PC-9 (cell line): ENCODE measurements at regions of chr12 and their contacts with region 1.

Region 1: GRCh38 chr12:92987362-92987761 is 58.3 kb upstream of the EEA1 start:
- DNase-seq: peak in 1 of 2 experiments; percentile 72
- H3K4me3 ChIP-seq: no peak overlapping the region
- H3K27ac ChIP-seq: no peak overlapping the region
- H3K4me1 ChIP-seq: peaks cover 14% of the 10 kb centered on the region
- H3K27me3 ChIP-seq: no peaks in the 10 kb centered on the region
- CTCF ChIP-seq: peak; percentile 78

Region 2: GRCh38 chr12:91040096-91040755 is 1947.1 kb before region 1 on chr12:
- CTCF ChIA-PET with region 1: no interaction called
- POLR2A ChIA-PET with region 1: interaction called, 12 read pairs
- intact Hi-C with region 1: no loop called
- DNase-seq: no peak
- H3K4me3 ChIP-seq: no peak overlapping the region
- H3K27ac ChIP-seq: no peak overlapping the region
- H3K4me1 ChIP-seq: 0 out of 2 replicates have a peak, but pooled peaks cover 4% of the 10 kb centered on the region
- H3K27me3 ChIP-seq: no peaks in the 10 kb centered on the region
- CTCF ChIP-seq: no peak

Region 3: DNA sequence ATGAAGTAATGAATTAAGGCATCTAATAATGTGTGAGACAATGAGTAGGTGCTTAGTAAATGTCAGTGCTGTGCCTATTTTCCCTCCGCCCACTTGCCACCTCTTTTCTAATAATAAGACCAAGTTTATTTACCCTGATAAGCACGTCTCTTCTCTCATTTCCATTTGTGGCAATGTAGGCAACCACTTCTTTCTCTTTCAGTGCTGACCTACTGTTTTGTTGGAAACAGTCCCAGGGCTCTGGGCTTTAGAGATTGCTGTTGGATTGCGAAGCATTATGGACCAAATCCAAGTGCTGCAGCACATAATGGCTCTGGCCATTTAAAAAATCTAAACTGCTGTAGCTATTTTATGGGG is 425.8 kb before region 1 on chr12:
- CTCF ChIA-PET with region 1: no interaction called
- POLR2A ChIA-PET with region 1: no interaction called
- intact Hi-C with region 1: no loop called
- DNase-seq: no peak
- H3K4me3 ChIP-seq: no peak overlapping the region
- H3K27ac ChIP-seq: no peak overlapping the region
- H3K4me1 ChIP-seq: no peaks in the 10 kb centered on the region
- H3K27me3 ChIP-seq: no peaks in the 10 kb centered on the region
- CTCF ChIP-seq: no peak

Region 4: DNA sequence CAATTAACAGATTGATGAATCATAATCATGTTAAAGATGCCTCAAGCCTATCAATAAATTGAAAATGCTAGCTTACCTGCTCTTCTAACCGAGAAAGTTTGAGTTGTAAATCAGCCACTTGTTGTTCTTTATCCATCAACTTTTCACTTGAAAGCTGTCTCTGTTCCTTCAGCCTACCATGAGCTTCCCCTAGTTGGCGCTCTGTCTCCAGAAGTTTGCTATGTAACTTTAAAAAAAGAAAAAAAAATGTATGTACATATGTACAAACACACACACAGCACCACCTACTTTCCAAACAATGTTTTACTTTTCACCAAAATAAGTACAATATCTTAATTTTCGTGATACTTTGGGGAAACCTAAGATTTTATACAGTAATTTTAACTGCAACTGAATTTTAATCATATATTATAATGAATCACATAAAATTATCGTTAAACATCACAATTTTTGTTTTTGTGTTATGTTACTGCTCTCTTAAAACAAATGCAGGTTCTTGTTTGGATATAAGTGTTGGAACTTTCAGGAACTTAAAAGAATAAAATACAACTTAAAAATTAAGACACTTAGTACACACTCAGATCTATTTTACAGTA is 159.4 kb before region 1 on chr12:
- CTCF ChIA-PET with region 1: interaction called, 3 read pairs
- POLR2A ChIA-PET with region 1: no interaction called
- intact Hi-C with region 1: loop called (anchors 2 kb)
- DNase-seq: peak in 1 of 2 experiments; percentile 29
- H3K4me3 ChIP-seq: no peak overlapping the region
- H3K27ac ChIP-seq: no peak overlapping the region
- H3K4me1 ChIP-seq: no peaks in the 10 kb centered on the region
- H3K27me3 ChIP-seq: no peaks in the 10 kb centered on the region
- CTCF ChIP-seq: peak; percentile 77

Region 5: DNA sequence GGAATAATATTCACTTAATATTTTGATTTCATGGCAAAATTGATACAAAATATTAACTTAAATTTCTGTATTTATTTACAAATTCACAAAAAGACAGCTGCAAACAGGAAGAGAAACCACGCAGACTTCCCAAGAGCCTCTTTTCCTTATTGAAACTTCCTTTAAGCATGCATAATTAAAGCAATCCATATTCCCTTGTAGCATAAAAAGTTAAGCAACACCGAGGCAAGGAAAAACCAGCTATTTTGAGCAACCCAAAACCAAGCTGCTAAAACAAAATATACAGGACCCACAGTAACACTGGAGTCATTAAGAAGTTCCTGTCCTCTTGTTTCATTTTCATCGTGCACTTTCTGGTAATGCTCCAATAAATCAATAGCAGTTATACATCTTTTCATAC is 116.2 kb before region 1 on chr12:
- CTCF ChIA-PET with region 1: no interaction called
- POLR2A ChIA-PET with region 1: no interaction called
- intact Hi-C with region 1: no loop called
- DNase-seq: no peak
- H3K4me3 ChIP-seq: no peak overlapping the region
- H3K27ac ChIP-seq: no peak overlapping the region
- H3K4me1 ChIP-seq: no peaks in the 10 kb centered on the region
- H3K27me3 ChIP-seq: no peaks in the 10 kb centered on the region
- CTCF ChIP-seq: no peak

Region 6: GRCh38 chr12:92943482-92944250 is 43.7 kb before region 1 on chr12:
- CTCF ChIA-PET with region 1: no interaction called
- POLR2A ChIA-PET with region 1: no interaction called
- intact Hi-C with region 1: no loop called
- DNase-seq: no peak
- H3K4me3 ChIP-seq: no peak overlapping the region
- H3K27ac ChIP-seq: no peak overlapping the region
- H3K4me1 ChIP-seq: no peaks in the 10 kb centered on the region
- H3K27me3 ChIP-seq: no peaks in the 10 kb centered on the region
- CTCF ChIP-seq: no peak

Region 7: DNA sequence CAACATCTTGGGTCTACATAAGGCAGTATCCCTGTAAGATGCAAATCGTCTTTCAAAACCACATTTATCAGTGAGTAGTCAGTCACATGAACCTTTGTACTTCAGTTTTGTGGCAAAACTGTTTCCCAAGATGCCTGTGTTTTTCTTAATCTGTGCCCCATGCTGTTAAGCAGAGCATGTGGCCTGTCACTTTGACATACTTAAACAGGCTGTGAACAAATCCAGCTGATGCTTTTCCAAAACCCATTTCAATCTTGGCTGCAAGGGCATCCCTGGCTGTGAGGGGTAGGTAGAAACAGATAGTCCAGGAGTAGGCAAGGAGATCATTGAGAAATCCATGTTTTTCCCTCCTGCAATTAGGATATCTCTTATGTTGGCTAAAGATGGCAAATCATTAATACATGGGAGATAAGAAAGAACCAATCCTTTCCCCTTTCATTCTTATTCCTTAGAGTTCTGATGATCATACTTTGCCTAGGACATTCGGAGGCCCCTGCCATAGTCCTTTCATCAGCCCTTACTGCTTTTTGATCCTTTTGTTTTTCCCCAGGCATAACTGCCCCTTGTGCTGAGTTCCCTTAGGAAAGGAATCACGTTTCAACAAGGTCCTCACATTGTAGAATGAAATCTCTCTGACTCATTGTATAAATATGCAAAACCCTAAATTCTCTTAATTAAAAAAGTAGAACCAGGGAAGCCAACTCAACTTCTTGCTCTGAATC is 62.8 kb after region 1 on chr12:
- CTCF ChIA-PET with region 1: interaction called, 10 read pairs
- POLR2A ChIA-PET with region 1: no interaction called
- intact Hi-C with region 1: no loop called
- DNase-seq: peak in 1 of 2 experiments; percentile 59
- H3K4me3 ChIP-seq: no peak overlapping the region
- H3K27ac ChIP-seq: no peak overlapping the region
- H3K4me1 ChIP-seq: peaks cover 13% of the 10 kb centered on the region
- H3K27me3 ChIP-seq: no peaks in the 10 kb centered on the region
- CTCF ChIP-seq: no peak

Region 8: GRCh38 chr12:93378373-93379325 is 391.3 kb after region 1 on chr12:
- CTCF ChIA-PET with region 1: interaction called, 7 read pairs
- POLR2A ChIA-PET with region 1: no interaction called
- intact Hi-C with region 1: loop called (anchors 1 kb)
- DNase-seq: peak in 1 of 2 experiments; percentile 19
- H3K4me3 ChIP-seq: peak overlapping the region; percentile 86
- H3K27ac ChIP-seq: peak overlapping the region; percentile 42
- H3K4me1 ChIP-seq: peaks cover 28% of the 10 kb centered on the region
- H3K27me3 ChIP-seq: no peaks in the 10 kb centered on the region
- CTCF ChIP-seq: no peak

Region 9: DNA sequence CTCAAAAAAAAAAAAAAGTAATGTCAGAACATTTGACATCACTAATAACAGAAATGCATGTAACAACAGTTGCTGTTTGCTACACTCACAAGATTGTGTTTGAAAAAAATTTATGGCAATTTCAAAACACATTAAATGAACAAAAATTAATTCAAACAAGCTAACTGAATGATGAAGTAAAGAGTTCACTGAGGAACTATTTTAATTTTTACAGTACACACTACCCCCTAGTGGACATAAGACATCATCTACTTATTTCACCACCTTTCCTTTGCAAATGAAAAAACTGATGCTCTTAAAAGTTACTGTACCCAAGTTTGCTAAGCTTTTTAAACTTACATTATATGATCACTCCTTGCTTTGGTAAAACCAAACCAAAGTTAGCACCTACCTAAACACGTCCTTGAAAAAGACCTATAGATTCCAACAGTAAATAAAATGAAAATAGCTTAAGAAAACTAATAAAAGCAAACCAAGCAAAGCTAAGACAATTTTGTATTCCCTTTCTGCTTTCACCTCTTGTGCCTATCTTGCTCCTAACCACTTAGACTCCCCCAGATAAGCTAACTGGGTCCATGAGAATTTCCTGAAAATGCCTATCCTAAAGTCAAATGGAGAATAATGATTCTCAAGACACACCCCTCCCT is 432.1 kb after region 1 on chr12:
- CTCF ChIA-PET with region 1: interaction called, 5 read pairs
- POLR2A ChIA-PET with region 1: no interaction called
- intact Hi-C with region 1: loop called (anchors 1 kb)
- DNase-seq: peak in 1 of 2 experiments; percentile 46
- H3K4me3 ChIP-seq: no peak overlapping the region
- H3K27ac ChIP-seq: no peak overlapping the region
- H3K4me1 ChIP-seq: no peaks in the 10 kb centered on the region
- H3K27me3 ChIP-seq: no peaks in the 10 kb centered on the region
- CTCF ChIP-seq: peak; percentile 79